Activated CD4-positive, alpha-beta T cell treated with anti-CD3 and anti-CD28 coated beads, Interleukin-2, amount 10 ng/mL, durations not matched to agents 24 days and 14 days (primary cell): ENCODE measurements at regions of chr6 and their contacts with region 1.

Region 1: GRCh38 chr6:2853761-2854395 is 12.2 kb upstream of the SERPINB1 start:
- DNase-seq: peak; percentile 87
- H3K4me3 Mint-ChIP-seq: peak overlapping the region; percentile 80
- H3K27ac Mint-ChIP-seq: peak overlapping the region; percentile 98
- H3K4me1 Mint-ChIP-seq: peaks cover 65% of the 10 kb centered on the region
- H3K27me3 Mint-ChIP-seq: no peaks in the 10 kb centered on the region

Region 2: GRCh38 chr6:2841264-2842138 is 12.4 kb before region 1 on chr6 and contains the start of gene SERPINB1:
- intact Hi-C with region 1: loop called (anchors 1 kb)
- DNase-seq: peak; percentile 94
- H3K4me3 Mint-ChIP-seq: peak within 1 kb of the TSS; percentile 91
- H3K27ac Mint-ChIP-seq: peak within 1 kb of the TSS; percentile 88
- H3K4me1 Mint-ChIP-seq: peaks cover 57% of the 10 kb centered on the region
- H3K27me3 Mint-ChIP-seq: no peaks in the 10 kb centered on the region
- total RNA-seq, gene SERPINB1: 76.1 and 79.9 TPM in 2 replicates

Region 3: DNA sequence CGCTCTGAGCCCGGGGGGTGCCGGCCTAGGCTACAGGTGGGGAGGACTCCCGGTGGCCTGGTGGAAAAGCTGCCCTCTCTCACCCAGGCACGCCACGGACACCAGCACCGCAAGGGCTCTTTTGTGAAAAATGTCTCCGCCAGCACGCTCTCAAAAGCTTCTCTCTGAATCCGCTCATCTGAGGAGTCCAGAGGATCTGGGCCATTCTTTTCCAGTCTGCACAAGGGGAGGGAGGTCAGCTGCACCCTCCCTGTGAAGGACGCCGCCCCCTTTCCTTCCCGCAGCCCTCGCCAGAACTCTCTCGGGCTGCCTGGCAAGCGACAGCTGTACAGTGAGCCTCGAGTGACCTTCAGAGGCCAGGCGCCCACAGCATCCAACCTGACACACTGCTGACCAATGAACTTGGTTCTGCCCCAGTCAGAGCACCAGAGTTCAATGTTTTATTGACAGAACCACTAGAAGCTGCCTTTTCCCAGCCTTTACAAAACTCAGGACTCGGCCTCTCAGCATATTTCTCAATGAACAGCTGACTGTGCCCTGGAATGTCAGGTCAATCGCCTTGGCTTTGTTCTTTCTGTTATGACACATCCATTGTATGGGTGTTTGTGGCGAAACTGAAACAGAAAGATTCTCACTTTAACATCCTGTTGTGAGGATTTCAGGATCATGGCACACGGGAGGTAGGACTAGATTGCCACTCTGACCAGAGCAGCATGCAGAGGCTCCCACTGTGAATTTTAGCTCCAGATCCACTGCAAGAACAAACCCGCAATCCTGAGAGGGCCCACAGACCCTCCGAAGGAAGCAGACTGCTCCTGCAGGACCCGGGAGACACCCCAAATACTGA is 22.6 kb after region 1 on chr6:
- intact Hi-C with region 1: loop called (anchors 1 kb)
- DNase-seq: peak; percentile 74
- H3K4me3 Mint-ChIP-seq: peak overlapping the region; percentile 86
- H3K27ac Mint-ChIP-seq: peak overlapping the region; percentile 97
- H3K4me1 Mint-ChIP-seq: peaks cover 77% of the 10 kb centered on the region
- H3K27me3 Mint-ChIP-seq: no peaks in the 10 kb centered on the region

Region 4: DNA sequence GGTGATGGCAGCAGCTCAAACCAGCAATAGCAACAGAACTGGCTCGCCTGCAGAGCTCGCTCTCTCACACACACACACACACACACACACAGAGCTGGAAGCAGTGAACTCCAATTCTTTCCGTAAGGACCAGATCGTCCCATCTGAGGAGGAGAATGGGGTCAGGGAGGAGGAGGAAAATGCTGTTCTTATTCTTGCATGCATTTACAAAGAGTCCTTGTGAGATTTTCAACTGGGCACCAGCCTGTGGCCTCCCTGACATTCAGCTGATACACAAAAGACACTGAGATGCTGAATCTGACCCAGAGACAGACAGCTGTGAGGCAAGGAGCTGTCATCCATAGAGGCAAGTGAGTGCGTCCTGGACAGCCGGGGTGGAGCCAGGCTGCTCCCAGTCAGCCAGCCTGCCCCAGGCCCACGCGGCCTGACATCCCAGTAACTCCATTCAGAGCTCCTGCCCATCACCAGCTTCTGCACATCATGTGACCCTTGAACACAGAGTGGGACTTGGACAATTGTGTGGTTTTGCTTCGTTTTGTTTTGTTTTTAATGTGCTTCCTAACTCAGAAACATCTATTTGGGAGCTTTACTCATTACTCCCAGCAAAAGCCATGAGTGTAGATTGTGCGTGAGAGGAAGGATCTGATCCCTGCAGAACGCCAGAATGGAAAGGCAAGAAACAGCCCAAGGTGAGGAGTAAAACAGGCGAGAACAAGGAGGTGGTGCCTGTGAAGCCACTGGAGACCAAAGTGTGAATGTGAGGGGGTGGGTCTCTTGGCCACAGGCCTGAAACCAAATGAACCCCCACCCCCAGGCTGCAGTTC is 47.2 kb after region 1 on chr6:
- intact Hi-C with region 1: loop called (anchors 2 kb)
- DNase-seq: peak; percentile 63
- H3K4me3 Mint-ChIP-seq: peak overlapping the region; percentile 97
- H3K27ac Mint-ChIP-seq: peak overlapping the region; percentile 90
- H3K4me1 Mint-ChIP-seq: peaks cover 51% of the 10 kb centered on the region
- H3K27me3 Mint-ChIP-seq: no peaks in the 10 kb centered on the region